ENCODE measurements at regions of chr11 and their contacts with region 1.

Region 1: GRCh38 chr11:15911377-15912044 is 444.8 kb downstream of the SOX6 start:
- DNase-seq: peak; percentile 21 to 81 (median 65)
- H3K4me3 ChIP-seq: no peak overlapping the region
- H3K27ac ChIP-seq: no peak overlapping the region
- H3K4me1 ChIP-seq: no peaks in the 10 kb centered on the region
- H3K27me3 ChIP-seq: no peaks in the 10 kb centered on the region
- CTCF ChIP-seq: no peak
- POLR2A ChIP-seq: no peak

Region 2: GRCh38 chr11:15194671-15195415 is 716.7 kb before region 1 on chr11:
- intact Hi-C with region 1: loop called in 1 of 2 experiments (anchors 5 kb)
- DNase-seq: no peak
- H3K4me3 ChIP-seq: no peak overlapping the region
- H3K27ac ChIP-seq: no peak overlapping the region
- H3K4me1 ChIP-seq: no peaks in the 10 kb centered on the region
- H3K27me3 ChIP-seq: no peaks in the 10 kb centered on the region
- CTCF ChIP-seq: no peak
- POLR2A ChIP-seq: no peak

Region 3: GRCh38 chr11:15519124-15519791 is 392.3 kb before region 1 on chr11:
- intact Hi-C with region 1: no loop called
- DNase-seq: no peak
- H3K4me3 ChIP-seq: no peak overlapping the region
- H3K27ac ChIP-seq: no peak overlapping the region
- H3K4me1 ChIP-seq: no peaks in the 10 kb centered on the region
- H3K27me3 ChIP-seq: no peaks in the 10 kb centered on the region
- CTCF ChIP-seq: no peak
- POLR2A ChIP-seq: no peak

Measured in adrenal gland (tissue), 19 donors.